Ascending aorta (tissue), 2 donors: ENCODE measurements at regions of chr2 and their contacts with region 1.

Region 1: GRCh38 chr2:121710470-121711170 is 26.1 kb downstream of the NIFK start:
- DNase-seq: no peak
- H3K4me3 ChIP-seq: no peak overlapping the region
- H3K27ac ChIP-seq: peak overlapping the region in 1 of 2 donors; percentile 18
- H3K4me1 ChIP-seq: peaks cover 0 to 8% of the 10 kb centered on the region in 2 donors
- H3K27me3 ChIP-seq: no peaks in the 10 kb centered on the region
- CTCF ChIP-seq: no peak

Region 2: DNA sequence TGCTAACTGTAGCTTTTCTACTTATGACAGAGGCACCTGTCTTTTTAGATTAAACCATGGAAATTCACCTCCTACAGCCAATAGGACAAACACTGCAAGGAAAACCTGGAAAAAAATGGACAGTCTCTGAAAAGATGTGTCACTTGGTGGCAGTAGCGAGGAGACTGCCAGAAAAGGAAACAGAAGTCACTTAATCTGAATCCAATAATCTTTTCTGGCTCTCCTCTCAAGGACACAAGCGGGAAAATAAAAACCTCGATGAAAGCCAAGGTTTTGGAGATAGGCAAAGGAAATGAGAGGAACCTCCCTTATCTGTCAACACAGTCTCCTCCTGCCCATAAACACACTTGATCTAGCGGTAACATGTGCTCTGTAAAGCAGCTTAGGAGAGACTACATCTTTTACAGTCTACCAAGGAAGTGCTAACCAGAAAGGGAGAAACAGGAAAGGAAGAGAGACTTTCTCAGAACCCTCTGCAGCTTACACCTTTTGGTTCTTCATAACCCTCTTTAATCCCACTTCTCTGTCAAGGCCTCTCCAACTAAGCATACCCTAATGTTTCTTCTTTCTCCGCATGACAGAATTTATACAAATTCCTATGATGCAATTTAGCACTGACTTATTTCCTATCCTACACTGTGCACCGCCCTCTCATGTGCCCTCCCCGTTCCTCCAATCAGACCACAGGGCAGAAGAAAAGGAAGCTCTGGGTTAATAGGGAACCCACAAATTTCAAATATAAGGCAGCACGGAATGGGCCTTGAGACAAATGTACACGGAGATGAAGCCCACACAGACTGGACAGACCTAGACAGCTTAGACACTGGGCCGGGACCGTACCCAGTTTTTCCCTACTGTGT is 114.2 kb before region 1 on chr2:
- intact Hi-C with region 1: loop called (anchors 5 kb)
- DNase-seq: peak in 1 of 2 donors; percentile 18
- H3K4me3 ChIP-seq: peak overlapping the region in 1 of 2 donors; percentile 25
- H3K27ac ChIP-seq: peak overlapping the region in 1 of 2 donors; percentile 12
- H3K4me1 ChIP-seq: peaks cover 3 to 12% of the 10 kb centered on the region in 2 donors
- H3K27me3 ChIP-seq: no peaks in the 10 kb centered on the region
- CTCF ChIP-seq: peak in 1 of 3 experiments; percentile 42